ENCODE measurements at regions of chr20 and their contacts with region 1.

Region 1: DNA sequence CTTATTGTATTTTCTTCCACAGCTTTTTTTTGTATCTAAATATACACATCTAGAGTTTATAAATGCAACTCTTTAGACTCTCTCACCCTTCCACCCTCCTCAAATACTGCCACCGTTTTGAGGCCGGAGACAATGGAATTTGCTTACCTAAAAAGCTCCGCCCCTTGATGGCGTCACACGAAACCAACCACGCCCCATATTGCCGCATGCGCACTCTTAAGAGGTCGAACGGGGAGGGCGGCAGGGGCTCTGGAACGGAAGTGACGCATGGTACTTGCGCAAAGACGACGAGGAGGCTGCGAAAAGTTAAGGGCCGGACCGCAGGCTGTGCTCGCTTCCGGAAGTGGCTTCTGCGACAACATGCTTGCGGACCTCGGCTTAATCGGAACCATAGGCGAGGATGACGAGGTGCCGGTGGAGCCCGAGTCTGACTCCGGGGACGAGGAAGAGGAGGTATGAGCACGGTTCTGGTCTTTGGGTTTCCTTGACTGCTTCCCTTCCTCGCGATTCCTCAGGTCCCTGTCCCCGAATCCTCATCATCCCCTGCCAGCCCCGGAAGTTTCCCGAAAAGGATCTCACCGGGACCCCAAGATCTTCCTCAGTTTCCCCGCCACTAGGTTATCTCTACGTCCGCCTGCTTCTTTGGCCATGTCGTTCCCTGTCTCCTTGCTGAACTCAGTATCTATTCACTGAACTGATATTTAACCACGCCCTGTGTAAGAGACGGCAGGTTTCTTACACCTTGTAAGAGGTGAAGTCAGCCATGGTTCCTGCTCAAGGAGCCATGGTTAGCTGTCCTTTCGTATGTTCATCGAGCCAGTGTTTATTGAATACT is at the start of gene DDX27:
- DNase-seq: peak; percentile 99
- H3K4me3 Mint-ChIP-seq: peak within 1 kb of the TSS; percentile 88
- H3K27ac Mint-ChIP-seq: peak within 1 kb of the TSS; percentile 89
- H3K4me1 Mint-ChIP-seq: peaks cover 29% of the 10 kb centered on the region
- H3K27me3 Mint-ChIP-seq: no peaks in the 10 kb centered on the region
- total RNA-seq, gene DDX27: 42.8 to 43.5 TPM

Region 2: DNA sequence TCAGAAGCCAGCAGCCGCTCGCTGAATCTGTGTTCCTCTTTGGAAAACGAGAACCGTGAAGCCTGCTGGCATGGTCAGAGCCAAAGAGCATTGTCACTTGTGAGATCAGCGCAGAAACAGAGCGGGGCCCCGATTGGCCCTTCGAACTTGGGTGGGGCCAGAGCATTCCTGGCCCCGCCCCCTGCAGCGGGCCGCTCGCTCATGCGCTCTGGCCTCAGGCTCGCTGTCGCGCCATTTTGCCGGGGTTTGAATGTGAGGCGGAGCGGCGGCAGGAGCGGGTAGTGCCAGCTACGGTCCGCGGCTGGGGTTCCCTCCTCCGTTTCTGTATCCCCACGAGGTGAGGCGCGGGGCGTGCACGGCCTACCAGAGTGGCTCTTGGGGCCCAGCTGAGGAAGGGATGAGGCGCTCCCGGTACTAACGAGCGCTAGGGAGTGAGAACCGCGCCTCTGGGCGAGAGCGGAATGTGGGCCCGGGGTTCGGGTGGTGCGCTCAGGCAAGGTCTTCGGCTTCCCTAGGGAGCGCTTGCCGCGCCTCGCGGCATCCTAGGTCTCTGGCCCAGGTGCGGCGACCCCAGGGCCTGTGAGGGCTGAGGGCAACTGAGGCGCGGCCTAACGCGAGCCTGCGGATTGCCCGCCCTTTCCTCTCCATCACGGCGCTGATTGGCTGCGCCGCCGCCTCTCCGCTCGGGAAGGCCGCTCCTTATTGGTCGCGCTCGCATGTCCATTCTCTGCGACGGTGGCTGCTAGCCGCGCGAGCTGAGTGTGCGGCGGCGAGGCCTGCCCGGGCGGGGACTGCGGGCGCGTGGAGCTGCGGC is 173.0 kb before region 1 on chr20 and contains the start of gene CSE1L:
- CTCF ChIA-PET with region 1: interaction called, 4 read pairs
- POLR2A ChIA-PET with region 1: interaction called, 5 read pairs
- intact Hi-C with region 1: loop called (anchors 1 kb)
- DNase-seq: peak; percentile 96
- H3K4me3 Mint-ChIP-seq: peak within 1 kb of the TSS; percentile 99
- H3K27ac Mint-ChIP-seq: peak within 1 kb of the TSS; percentile 99
- H3K4me1 Mint-ChIP-seq: peaks cover 33% of the 10 kb centered on the region
- H3K27me3 Mint-ChIP-seq: no peaks in the 10 kb centered on the region
- total RNA-seq, gene CSE1L: 107 to 109 TPM

Region 3: DNA sequence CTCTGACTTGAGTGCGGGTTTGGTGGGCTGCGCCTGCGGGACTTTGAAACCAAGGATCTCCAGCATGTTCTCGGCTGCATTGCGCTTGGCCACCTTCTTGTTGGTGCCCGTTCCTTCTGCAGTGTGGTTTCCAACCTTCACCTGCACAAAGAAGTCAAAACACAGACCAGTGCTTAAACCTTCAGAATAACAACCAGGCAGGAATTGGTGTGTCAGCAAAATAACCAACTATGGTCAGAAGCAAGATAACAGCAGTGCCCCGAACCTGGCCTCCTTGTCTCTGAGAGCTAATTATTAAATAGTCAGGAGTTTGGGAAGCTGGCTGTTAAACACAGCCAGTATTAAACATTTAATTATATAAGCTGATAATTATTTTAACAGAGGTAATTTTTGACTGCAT is 99.3 kb before region 1 on chr20:
- CTCF ChIA-PET with region 1: interaction called, 14 read pairs
- POLR2A ChIA-PET with region 1: no interaction called
- intact Hi-C with region 1: no loop called
- DNase-seq: no peak
- H3K4me3 Mint-ChIP-seq: no peak overlapping the region
- H3K27ac Mint-ChIP-seq: no peak overlapping the region
- H3K4me1 Mint-ChIP-seq: no peaks in the 10 kb centered on the region
- H3K27me3 Mint-ChIP-seq: no peaks in the 10 kb centered on the region

Region 4: GRCh38 chr20:49140834-49141233 is 78.5 kb before region 1 on chr20:
- CTCF ChIA-PET with region 1: interaction called, 237 read pairs
- POLR2A ChIA-PET with region 1: no interaction called
- intact Hi-C with region 1: no loop called
- DNase-seq: no peak
- H3K4me3 Mint-ChIP-seq: no peak overlapping the region
- H3K27ac Mint-ChIP-seq: no peak overlapping the region
- H3K4me1 Mint-ChIP-seq: peaks cover 17% of the 10 kb centered on the region
- H3K27me3 Mint-ChIP-seq: no peaks in the 10 kb centered on the region

Region 5: DNA sequence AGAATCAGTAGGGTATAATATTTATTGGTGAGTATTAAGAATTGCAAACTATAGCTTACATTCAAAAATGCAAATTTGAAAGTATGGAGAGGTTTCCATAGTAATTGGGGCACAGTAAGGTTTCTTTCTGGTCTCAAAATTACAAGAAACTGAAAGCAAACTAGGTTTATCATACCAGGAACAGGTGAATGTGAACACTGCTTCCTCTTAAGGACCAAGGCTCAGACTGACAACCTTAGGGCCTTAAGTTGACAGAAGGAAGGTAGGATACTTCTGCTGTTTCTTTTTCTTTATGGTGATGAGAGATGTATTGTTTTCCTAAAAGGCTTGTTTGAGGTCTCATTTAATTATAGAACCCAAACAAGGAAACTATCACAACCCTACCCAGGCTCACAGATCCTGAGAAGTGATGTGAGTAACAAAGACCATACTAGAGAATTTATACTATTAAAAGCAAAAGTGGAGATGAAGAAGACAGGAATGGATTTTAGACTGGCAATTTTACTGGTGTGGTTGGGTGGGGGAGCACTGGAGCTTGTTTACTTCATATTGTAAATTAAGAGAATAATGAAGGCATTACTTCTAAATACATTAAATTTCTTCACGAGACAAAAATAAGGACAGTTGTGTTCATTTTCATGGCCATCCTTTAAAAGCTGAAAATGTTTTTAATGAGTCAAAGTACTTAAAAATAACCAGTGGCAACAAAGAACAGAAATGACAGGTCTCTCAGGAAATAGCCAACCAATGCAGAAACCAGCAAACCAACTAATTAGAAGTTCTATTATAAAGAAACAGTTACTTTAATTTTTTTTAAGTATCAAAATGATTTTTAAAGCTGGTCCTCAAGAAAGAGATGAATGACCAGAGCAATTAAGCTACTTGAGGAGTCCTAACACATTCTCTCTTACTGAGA is 52.5 kb before region 1 on chr20:
- CTCF ChIA-PET with region 1: interaction called, 29 read pairs
- POLR2A ChIA-PET with region 1: interaction called, 10 read pairs
- intact Hi-C with region 1: loop called (anchors 1 kb)
- DNase-seq: no peak
- H3K4me3 Mint-ChIP-seq: peak overlapping the region; percentile 41
- H3K27ac Mint-ChIP-seq: peak overlapping the region; percentile 84
- H3K4me1 Mint-ChIP-seq: peaks cover 61% of the 10 kb centered on the region
- H3K27me3 Mint-ChIP-seq: no peaks in the 10 kb centered on the region

Region 6: DNA sequence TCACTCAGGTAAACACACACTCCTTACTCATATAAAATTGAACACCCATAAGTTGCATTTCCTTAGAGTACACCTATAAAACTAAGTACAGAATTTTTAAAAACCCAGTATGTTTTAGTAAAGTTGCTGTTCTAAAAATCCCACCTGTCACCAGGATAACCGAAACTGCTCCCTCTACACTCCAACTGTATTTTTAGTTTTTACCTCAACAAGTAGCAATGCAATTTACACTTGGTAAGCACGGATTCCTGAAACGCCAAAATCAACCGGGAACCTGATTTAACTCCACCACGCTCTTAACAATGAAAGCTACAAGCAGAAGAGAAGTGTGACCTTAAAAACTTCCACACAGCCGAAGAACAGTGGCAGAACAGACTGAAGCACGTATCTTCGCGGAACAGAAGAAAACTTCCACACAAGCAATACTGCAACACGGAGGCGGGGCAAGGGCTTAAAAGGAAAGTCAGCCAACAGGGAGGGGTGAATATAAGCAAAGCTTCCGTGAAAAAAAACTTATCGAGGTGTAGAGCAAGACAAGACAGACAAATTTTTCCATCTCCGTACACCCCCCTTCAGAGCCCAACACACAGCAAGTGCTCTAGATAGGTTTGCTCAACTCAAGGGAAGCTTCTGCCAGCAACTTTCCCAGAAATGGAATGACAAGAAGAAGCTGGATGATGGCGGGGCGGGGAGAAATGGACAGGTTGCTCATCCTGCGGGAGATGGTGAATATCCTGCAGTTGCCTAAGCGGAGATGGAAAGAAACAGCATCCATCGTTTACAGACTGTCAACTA is 32.6 kb before region 1 on chr20:
- CTCF ChIA-PET with region 1: interaction called, 33 read pairs
- POLR2A ChIA-PET with region 1: interaction called, 5 read pairs
- intact Hi-C with region 1: loop called (anchors 1 kb)
- DNase-seq: peak; percentile 79
- H3K4me3 Mint-ChIP-seq: peak overlapping the region; percentile 87
- H3K27ac Mint-ChIP-seq: peak overlapping the region; percentile 89
- H3K4me1 Mint-ChIP-seq: peaks cover 48% of the 10 kb centered on the region
- H3K27me3 Mint-ChIP-seq: no peaks in the 10 kb centered on the region

Region 7: GRCh38 chr20:49278036-49278817 is 58.9 kb after region 1 on chr20 and contains the start of gene ZNFX1:
- CTCF ChIA-PET with region 1: interaction called, 7 read pairs
- POLR2A ChIA-PET with region 1: interaction called, 3 read pairs
- intact Hi-C with region 1: loop called (anchors 1 kb)
- DNase-seq: peak; percentile 99
- H3K4me3 Mint-ChIP-seq: peak within 1 kb of the TSS; percentile 99
- H3K27ac Mint-ChIP-seq: peak within 1 kb of the TSS; percentile 99
- H3K4me1 Mint-ChIP-seq: peaks cover 51% of the 10 kb centered on the region
- H3K27me3 Mint-ChIP-seq: peaks cover 2% of the 10 kb centered on the region
- total RNA-seq, gene ZNFX1: 42.5 to 45.3 TPM

Region 8: GRCh38 chr20:49361862-49362660 is 142.8 kb after region 1 on chr20:
- CTCF ChIA-PET with region 1: no interaction called
- POLR2A ChIA-PET with region 1: no interaction called
- intact Hi-C with region 1: no loop called
- DNase-seq: no peak
- H3K4me3 Mint-ChIP-seq: no peak overlapping the region
- H3K27ac Mint-ChIP-seq: no peak overlapping the region
- H3K4me1 Mint-ChIP-seq: no peaks in the 10 kb centered on the region
- H3K27me3 Mint-ChIP-seq: peaks cover 9% of the 10 kb centered on the region